Caco-2 (cell line): ENCODE measurements at regions of chr11 and their contacts with region 1.

Region 1: DNA sequence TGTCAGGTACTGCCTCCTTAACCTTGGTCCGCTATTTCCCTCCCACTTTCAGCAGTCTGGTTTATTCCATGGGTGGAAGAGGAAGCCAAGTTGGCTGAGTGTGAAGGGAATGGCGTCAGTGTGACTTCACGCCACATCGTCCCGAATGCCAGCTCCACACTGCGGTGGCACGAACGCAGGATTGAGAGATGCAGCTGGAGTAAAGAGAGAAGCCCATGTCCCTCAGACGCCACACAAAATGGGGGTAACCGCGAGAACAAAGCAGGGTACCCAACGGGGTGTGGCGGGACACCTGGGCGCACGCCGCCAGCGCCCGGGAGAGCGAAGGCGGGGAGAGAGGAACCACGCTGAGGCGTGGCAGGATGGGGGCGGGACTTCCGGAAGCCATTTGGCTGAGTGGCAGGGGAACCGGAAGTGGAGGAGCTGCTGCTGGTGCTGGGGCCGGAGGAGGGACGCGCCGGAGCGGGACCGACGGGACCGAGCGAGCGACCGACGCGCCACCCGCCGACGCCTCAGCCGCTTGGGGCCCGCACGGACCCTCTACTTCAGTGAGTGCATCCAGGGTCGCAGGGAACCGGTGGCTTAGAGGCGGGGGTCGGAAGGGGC is at the start of gene PAFAH1B2:
- DNase-seq: peak; percentile 98 to 99
- H3K4me3 ChIP-seq: peak within 1 kb of the TSS; percentile 89
- H3K4me3 Mint-ChIP-seq: peak within 1 kb of the TSS; percentile 98
- H3K27ac Mint-ChIP-seq: peak within 1 kb of the TSS; percentile 95
- H3K4me1 ChIP-seq: peaks cover 6% of the 10 kb centered on the region; the same call in 1 of the 2 replicates
- H3K4me1 Mint-ChIP-seq: peaks cover 6% of the 10 kb centered on the region
- H3K27me3 ChIP-seq: no peaks in the 10 kb centered on the region
- H3K27me3 Mint-ChIP-seq: no peaks in the 10 kb centered on the region
- CTCF ChIP-seq: no peak
- total RNA-seq, gene PAFAH1B2: 167 and 168 TPM in 2 replicates

Region 2: DNA sequence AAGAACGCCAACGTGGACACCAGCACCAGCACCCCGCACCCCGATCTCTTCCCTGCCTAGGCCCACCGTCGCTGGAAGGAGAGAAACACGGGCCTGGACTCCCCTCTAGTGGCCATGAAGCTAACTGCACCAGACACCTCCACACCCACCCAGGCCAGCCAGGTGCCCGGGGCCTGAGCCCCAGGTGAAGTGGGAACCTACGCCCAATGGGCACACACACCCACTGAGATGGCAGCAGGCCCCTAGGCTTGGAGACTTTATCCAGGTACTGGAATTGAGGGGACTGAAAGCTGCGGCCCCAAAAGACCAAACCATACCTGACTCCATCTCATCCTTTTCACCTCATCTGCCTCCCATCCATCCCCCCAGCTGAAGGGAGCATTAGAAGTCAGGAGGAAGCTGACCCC is 452.2 kb before region 1 on chr11:
- CTCF ChIA-PET with region 1: no interaction called
- POLR2A ChIA-PET with region 1: no interaction called
- intact Hi-C with region 1: no loop called
- DNase-seq: peak; percentile 78 to 86
- H3K4me3 ChIP-seq: no peak overlapping the region
- H3K4me3 Mint-ChIP-seq: no peak overlapping the region
- H3K27ac Mint-ChIP-seq: no peak overlapping the region
- H3K4me1 ChIP-seq: peaks cover 47% of the 10 kb centered on the region
- H3K4me1 Mint-ChIP-seq: peaks cover 17% of the 10 kb centered on the region
- H3K27me3 ChIP-seq: no peaks in the 10 kb centered on the region
- H3K27me3 Mint-ChIP-seq: no peaks in the 10 kb centered on the region
- CTCF ChIP-seq: peak; percentile 98 to 100

Region 3: DNA sequence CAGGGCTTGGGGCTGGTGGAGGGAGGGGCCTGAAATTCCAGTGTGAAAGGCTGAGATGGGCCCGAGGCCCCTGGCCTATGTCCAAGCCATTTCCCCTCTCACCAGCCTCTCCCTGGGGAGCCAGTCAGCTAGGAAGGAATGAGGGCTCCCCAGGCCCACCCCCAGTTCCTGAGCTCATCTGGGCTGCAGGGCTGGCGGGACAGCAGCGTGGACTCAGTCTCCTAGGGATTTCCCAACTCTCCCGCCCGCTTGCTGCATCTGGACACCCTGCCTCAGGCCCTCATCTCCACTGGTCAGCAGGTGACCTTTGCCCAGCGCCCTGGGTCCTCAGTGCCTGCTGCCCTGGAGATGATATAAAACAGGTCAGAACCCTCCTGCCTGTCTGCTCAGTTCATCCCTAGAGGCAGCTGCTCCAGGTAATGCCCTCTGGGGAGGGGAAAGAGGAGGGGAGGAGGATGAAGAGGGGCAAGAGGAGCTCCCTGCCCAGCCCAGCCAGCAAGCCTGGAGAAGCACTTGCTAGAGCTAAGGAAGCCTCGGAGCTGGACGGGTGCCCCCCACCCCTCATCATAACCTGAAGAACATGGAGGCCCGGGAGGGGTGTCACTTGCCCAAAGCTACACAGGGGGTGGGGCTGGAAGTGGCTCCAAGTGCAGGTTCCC is 314.3 kb before region 1 on chr11 and contains the start of gene APOC3:
- CTCF ChIA-PET with region 1: no interaction called
- POLR2A ChIA-PET with region 1: no interaction called
- intact Hi-C with region 1: no loop called
- DNase-seq: peak; percentile 93 to 96
- H3K4me3 ChIP-seq: peak within 1 kb of the TSS; percentile 3; the same call in 1 of the 2 replicates
- H3K4me3 Mint-ChIP-seq: peak within 1 kb of the TSS; percentile 50
- H3K27ac Mint-ChIP-seq: peak within 1 kb of the TSS; percentile 89
- H3K4me1 ChIP-seq: peaks cover 84% of the 10 kb centered on the region
- H3K4me1 Mint-ChIP-seq: peaks cover 49% of the 10 kb centered on the region
- H3K27me3 ChIP-seq: no peaks in the 10 kb centered on the region
- H3K27me3 Mint-ChIP-seq: no peaks in the 10 kb centered on the region
- CTCF ChIP-seq: no peak
- total RNA-seq, gene APOC3: 103 and 128 TPM in 2 replicates

Region 4: DNA sequence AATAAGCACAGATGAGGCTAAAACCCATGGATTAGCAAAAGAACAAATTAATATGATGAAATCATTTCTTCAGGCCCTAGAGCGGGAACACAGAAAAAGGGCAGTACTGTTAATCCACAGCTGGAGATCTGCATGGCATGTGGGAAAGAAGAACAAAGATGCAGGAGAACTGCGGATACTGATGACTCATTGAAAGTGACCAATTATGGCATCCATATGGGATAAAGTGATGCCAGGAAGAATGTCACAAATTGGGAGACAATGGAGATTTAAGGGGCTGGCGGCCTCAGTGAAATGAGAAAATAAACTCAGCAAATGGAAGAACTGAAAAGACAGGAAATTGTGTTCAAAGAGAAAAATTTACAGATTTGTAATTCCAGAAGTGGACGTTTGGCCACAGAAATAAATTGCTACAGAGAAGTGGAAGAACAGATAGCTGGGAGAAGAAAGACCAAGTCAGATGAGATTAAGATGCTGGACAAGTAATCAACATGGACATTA is 85.2 kb before region 1 on chr11:
- CTCF ChIA-PET with region 1: no interaction called
- POLR2A ChIA-PET with region 1: no interaction called
- intact Hi-C with region 1: no loop called
- DNase-seq: no peak
- H3K4me3 ChIP-seq: no peak overlapping the region
- H3K4me3 Mint-ChIP-seq: no peak overlapping the region
- H3K27ac Mint-ChIP-seq: no peak overlapping the region
- H3K4me1 ChIP-seq: peaks cover 21% of the 10 kb centered on the region
- H3K4me1 Mint-ChIP-seq: peaks cover 20% of the 10 kb centered on the region
- H3K27me3 ChIP-seq: no peaks in the 10 kb centered on the region
- H3K27me3 Mint-ChIP-seq: no peaks in the 10 kb centered on the region
- CTCF ChIP-seq: no peak

Region 5: DNA sequence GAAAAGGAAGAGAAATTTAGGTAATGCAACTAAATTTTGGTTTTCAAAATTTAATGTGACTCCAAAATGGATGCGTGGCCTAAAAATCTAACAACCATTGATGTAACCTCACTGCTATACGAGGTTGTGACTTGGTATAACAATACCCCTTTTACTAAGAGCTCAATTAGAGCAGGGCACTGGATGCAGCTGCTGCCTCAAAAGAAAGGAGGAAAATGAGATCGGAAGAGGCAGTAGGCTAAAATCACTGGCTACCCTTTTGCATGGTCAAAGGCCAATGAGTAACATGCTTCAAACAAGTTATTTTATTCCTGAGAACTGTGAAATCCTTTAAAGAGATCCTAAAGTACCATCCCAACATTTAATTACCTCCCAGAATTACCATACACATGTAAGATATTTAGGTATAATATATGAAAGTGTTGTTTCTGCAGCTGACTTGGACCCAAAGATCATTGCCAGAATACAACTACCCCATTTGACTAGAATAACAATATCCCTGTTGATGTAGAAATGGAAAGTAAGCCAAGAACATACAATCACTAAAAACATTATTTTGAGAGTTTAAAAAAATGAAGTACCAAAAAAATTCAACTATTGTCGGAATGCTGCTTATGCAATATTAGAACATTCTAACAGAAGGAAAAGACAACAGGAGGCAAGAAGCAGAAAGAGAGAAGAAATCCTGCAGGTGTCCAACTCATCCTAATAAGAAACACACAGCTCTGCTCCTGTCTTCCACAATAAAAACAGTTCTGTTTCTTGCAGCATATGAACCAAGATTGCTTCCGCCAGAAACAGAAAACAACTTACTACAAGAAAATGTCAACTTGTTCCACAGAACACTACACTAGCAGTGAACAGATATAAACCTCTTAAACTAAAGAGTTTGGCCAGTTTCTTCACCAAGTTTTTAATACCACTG is 60.7 kb before region 1 on chr11:
- CTCF ChIA-PET with region 1: no interaction called
- POLR2A ChIA-PET with region 1: no interaction called
- intact Hi-C with region 1: no loop called
- DNase-seq: no peak
- H3K4me3 ChIP-seq: no peak overlapping the region
- H3K4me3 Mint-ChIP-seq: no peak overlapping the region
- H3K27ac Mint-ChIP-seq: peak overlapping the region; percentile 11
- H3K4me1 ChIP-seq: peaks cover 60% of the 10 kb centered on the region
- H3K4me1 Mint-ChIP-seq: peaks cover 36% of the 10 kb centered on the region
- H3K27me3 ChIP-seq: no peaks in the 10 kb centered on the region
- H3K27me3 Mint-ChIP-seq: no peaks in the 10 kb centered on the region
- CTCF ChIP-seq: no peak

Region 6: DNA sequence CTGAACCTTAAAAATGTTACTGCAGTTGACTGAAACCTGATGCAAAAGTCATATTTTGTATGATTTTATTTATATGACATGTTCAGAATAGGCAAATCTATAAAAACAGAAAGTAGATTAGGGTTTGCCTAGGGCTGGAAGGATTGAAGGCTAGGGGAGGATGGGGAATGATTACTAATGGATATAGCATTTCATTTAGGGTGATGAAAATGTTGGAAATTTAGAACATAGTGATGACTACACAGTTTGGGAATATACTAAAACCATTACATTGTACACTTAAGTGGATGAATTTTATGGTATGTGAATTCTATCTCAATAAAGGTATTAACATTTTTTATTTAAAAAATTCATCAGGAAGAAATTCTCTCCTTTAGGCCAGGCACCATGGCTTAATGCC is 22.8 kb before region 1 on chr11:
- CTCF ChIA-PET with region 1: no interaction called
- POLR2A ChIA-PET with region 1: interaction called, 14 read pairs
- intact Hi-C with region 1: no loop called
- DNase-seq: no peak
- H3K4me3 ChIP-seq: no peak overlapping the region
- H3K4me3 Mint-ChIP-seq: no peak overlapping the region
- H3K27ac Mint-ChIP-seq: no peak overlapping the region
- H3K4me1 ChIP-seq: no peaks in the 10 kb centered on the region
- H3K4me1 Mint-ChIP-seq: no peaks in the 10 kb centered on the region
- H3K27me3 ChIP-seq: no peaks in the 10 kb centered on the region
- H3K27me3 Mint-ChIP-seq: peaks cover 9% of the 10 kb centered on the region
- CTCF ChIP-seq: no peak

Region 7: DNA sequence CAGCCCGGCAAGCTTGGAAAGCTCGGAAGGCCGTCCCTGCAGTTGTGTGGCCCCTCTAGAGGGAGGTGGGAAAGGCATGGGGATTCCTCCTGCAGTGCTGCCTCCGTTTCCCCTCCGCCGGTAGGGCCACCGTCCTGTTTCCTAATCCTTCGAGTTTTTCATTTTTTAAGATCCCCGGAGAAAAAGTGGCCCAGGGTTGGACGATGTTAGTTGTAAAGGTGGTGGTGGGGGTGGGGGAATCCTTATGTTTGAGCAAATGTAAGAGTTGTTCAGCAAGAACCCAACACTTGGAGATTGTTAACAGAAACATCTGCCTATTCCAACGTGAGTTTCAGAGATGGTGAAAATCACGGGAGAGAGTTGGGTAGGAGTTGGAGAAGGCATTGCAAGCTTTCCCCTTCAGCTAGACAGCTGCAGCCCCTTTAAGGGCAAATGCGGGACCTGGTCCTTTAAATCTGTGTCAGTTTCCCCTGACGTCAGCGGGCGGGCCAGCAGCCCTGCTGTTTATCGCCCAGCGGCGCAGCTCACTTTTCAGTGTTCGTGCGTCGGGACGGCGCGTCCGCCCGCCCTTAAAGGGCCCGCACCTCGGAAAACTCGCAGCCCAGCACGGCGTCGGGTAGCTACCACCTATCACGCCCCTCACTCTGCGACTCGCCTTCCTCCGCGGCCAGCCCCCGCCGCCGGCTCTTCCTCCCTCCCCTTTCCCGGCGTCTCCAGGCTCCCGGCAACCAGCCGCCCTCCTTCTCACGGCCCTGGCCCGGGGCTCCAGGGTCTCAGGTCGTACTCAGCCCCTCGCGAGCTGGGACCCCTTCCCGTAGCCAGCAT is 34.4 kb after region 1 on chr11 and contains the start of gene SIDT2:
- CTCF ChIA-PET with region 1: interaction called, 14 read pairs
- POLR2A ChIA-PET with region 1: interaction called, 21 read pairs
- intact Hi-C with region 1: loop called (anchors 1 kb)
- DNase-seq: peak; percentile 96 to 97
- H3K4me3 ChIP-seq: peak within 1 kb of the TSS; percentile 87
- H3K4me3 Mint-ChIP-seq: peak within 1 kb of the TSS; percentile 97
- H3K27ac Mint-ChIP-seq: peak within 1 kb of the TSS; percentile 96
- H3K4me1 ChIP-seq: peaks cover 20% of the 10 kb centered on the region
- H3K4me1 Mint-ChIP-seq: peaks cover 23% of the 10 kb centered on the region
- H3K27me3 ChIP-seq: no peaks in the 10 kb centered on the region
- H3K27me3 Mint-ChIP-seq: no peaks in the 10 kb centered on the region
- CTCF ChIP-seq: no peak
- total RNA-seq, gene SIDT2: 57.2 and 61.7 TPM in 2 replicates

Region 8: DNA sequence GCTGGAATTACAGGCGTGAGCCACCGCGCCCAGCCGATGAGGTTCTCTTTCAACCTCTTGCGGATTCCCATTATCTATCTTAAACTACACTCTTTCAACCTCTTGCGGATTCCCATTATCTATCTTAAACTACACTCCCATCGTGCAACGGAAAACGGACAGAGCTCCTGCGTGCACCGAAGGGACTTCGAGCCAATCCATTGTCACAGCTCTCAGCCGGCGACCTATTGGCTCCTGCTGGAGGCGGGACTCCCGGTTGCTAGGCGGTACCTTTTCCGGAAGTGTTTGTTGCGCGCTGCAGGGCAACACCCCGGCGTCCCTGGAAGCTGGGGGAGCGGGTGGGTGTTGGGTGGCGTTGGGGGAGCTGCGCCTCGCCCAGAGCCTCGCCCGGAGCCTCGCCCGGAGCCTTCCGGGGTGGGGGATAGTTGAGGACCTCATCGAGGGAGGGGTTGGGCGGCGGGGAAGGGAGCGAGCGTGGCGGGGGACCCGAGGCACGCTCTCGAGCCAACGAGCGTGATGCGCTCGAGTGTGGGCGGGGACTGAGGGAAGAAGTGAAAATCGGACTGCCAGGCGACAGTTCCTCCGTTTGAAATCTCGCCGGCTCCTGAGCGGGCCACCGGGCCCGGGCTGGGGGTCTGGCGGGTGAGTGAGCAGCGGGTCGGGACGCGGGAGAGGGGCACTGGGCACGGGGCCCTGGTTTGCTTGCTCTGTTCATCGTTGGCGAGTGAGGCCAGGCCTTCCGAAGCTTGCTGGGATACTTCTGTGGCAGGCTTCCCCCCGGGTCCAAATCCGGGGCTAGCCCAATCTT is 183.8 kb after region 1 on chr11 and contains the start of gene CEP164:
- CTCF ChIA-PET with region 1: no interaction called
- POLR2A ChIA-PET with region 1: interaction called, 11 read pairs
- intact Hi-C with region 1: no loop called
- DNase-seq: peak; percentile 99
- H3K4me3 ChIP-seq: peak within 1 kb of the TSS; percentile 58
- H3K4me3 Mint-ChIP-seq: no peak within 1 kb of the TSS
- H3K27ac Mint-ChIP-seq: no peak within 1 kb of the TSS
- H3K4me1 ChIP-seq: 0 out of 2 replicates have a peak, but pooled peaks cover 7% of the 10 kb centered on the region
- H3K4me1 Mint-ChIP-seq: peaks cover 7% of the 10 kb centered on the region
- H3K27me3 ChIP-seq: no peaks in the 10 kb centered on the region
- H3K27me3 Mint-ChIP-seq: no peaks in the 10 kb centered on the region
- CTCF ChIP-seq: no peak
- total RNA-seq, gene CEP164: 48.9 and 50.0 TPM in 2 replicates